HEK293T (cell line): ENCODE measurements at regions of chr13 and their contacts with region 1.

Region 1: DNA sequence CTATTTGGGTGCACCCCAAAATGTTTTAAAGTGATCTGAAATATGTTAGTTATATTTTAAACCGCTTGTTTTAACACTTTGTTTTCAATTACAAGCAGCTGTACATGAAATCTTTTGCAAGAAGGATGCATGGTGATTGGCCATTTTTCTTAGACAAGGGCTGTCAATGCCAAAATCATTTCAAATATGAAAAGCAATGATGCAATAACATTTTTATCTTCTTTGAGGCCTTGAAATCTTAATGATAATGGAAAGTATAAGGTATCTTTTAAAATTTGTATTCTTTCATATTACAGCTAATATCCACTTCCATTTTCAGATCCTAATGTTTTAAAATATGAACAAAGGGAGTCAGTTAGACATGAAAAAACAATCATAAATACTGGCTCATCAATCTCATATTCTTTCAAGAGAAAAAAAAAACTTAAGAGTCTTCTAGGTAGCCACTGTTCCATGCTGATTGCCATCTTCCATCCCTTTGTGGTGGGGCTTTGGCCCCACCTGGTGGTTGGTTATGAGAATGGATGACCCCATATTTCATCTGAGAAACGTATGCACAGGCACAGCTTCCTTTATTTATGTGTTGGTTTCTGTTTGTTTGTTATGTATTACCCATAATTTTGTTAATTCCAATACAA is 330.3 kb upstream of the MIR17HG start:
- DNase-seq: peak; percentile 89

Region 2: GRCh38 chr13:90855513-90855912 is 161.6 kb before region 1 on chr13:
- CTCF ChIA-PET with region 1: interaction called, 10 read pairs
- POLR2A ChIA-PET with region 1: no interaction called
- DNase-seq: no peak